AG04450 (cell line): ENCODE measurements at regions of chr1 and their contacts with region 1.

Region 1: GRCh38 chr1:14970115-14970798 is 183.3 kb upstream of the TMEM51 start:
- DNase-seq: no peak
- H3K4me3 ChIP-seq: no peak overlapping the region
- H3K27ac ChIP-seq: no peak overlapping the region
- H3K27me3 ChIP-seq: no peaks in the 10 kb centered on the region
- CTCF ChIP-seq: no peak

Region 2: GRCh38 chr1:15038232-15039016 is 68.2 kb after region 1 on chr1:
- CTCF ChIA-PET with region 1: interaction called, 5 read pairs
- POLR2A ChIA-PET with region 1: interaction called, 12 read pairs
- DNase-seq: no peak
- H3K4me3 ChIP-seq: no peak overlapping the region
- H3K27ac ChIP-seq: no peak overlapping the region
- H3K27me3 ChIP-seq: no peaks in the 10 kb centered on the region
- CTCF ChIP-seq: peak; percentile 41